Endothelial cell of umbilical vein (primary cell): ENCODE measurements at regions of chr12 and their contacts with region 1.

Region 1: DNA sequence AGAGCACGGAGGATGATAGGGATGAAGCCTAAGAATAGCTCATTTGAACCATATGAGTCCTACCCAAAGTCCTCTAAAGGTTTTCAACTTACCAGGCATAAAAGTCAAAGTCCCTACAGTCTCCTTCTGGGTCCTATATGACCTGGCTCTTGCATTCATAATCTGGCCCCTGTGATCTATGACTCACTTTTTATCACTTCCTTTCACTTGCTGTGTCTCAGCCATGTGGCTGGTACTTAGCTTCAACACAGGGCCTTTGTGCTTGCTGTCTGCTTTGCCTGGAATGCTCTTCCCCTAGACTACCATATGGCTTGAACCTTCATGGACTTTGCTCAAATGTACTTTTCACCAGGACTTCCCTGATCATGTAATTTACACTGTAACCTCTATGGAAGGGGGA is 137.6 kb upstream of the TMTC1 start:
- DNase-seq: peak; percentile 84
- H3K4me3 ChIP-seq: no peak overlapping the region
- H3K27ac ChIP-seq: peak overlapping the region; percentile 13
- H3K4me1 ChIP-seq: peaks cover 11% of the 10 kb centered on the region
- H3K27me3 ChIP-seq: no peaks in the 10 kb centered on the region
- CTCF ChIP-seq: no peak
- POLR2A ChIP-seq: no peak

Region 2: GRCh38 chr12:29970501-29970900 is 49.2 kb after region 1 on chr12:
- CTCF ChIA-PET with region 1: interaction called, 4 read pairs
- POLR2A ChIA-PET with region 1: no interaction called
- dilution Hi-C with region 1: no loop called
- intact Hi-C with region 1: loop called (anchors 1 kb)
- DNase-seq: peak; percentile 90
- H3K4me3 ChIP-seq: no peak overlapping the region
- H3K27ac ChIP-seq: peak overlapping the region; percentile 79
- H3K4me1 ChIP-seq: peaks cover 21% of the 10 kb centered on the region
- H3K27me3 ChIP-seq: no peaks in the 10 kb centered on the region
- CTCF ChIP-seq: no peak
- POLR2A ChIP-seq: no peak